Caco-2 (cell line): ENCODE measurements at regions of chr20 and their contacts with region 1.

Region 1: DNA sequence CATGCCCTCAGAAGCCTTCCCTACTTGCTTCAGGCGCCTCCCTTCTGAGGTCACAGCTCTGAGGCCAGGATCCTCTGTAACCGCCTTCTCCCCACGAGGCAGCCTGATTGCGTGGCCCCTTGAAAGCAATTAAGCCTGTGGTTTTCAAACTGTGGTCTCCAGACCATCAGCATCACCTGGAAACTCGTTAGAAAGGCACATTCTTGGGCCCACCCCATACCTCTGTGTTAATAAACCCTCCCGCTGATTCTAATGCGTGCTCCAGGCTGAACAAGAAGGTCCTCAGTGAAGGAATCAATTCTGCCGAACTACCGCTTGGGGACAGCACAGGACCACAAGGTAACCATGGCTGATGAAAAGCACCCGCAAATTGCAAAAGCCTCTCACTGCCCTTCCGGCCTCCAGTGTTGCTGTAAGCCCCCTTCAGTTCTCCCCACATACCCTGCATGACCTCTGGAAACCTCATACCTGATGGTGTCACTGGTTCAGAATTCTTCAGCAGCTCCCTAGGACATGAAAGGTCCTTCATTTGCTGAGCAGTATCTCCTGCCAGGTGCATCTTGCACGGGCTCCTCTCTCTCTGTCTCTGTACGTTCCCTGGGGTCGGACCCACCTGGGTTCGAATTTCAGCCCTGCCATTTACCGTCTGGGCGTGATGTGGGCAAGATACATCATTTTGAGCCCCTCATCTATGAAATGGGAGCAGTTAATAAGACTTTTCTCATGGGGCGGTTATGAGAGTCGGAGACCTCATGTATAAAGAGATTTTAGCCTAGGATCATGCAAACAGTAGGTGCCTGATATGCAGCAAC is 93.3 kb upstream of the RNF24 start:
- DNase-seq: peak; percentile 87 to 88
- H3K4me3 ChIP-seq: no peak overlapping the region
- H3K4me3 Mint-ChIP-seq: no peak overlapping the region
- H3K27ac Mint-ChIP-seq: peak overlapping the region; percentile 77
- H3K4me1 ChIP-seq: peaks cover 8% of the 10 kb centered on the region
- H3K4me1 Mint-ChIP-seq: peaks cover 12% of the 10 kb centered on the region
- H3K27me3 ChIP-seq: no peaks in the 10 kb centered on the region
- H3K27me3 Mint-ChIP-seq: no peaks in the 10 kb centered on the region
- CTCF ChIP-seq: peak; percentile 96 to 97

Region 2: DNA sequence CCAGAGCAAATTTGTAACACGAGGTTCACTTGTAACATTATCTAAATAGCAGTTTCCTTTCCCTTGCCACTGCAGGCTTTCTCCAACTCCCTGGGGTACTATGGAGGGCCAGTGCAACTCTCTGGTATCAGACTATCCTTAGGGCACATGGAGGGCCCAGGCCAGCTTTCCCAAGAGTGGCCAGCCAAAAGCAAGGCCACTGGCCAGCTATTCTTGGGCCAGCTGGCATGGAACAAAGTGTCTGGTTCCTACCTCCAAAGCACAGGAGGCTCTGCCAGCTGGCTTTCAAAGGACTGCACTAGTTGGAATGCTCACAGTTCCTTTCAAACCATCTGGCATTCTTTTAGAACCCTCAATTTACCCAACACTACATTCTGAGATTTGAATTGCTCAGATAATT is 102.1 kb before region 1 on chr20:
- CTCF ChIA-PET with region 1: no interaction called
- POLR2A ChIA-PET with region 1: no interaction called
- intact Hi-C with region 1: no loop called
- DNase-seq: no peak
- H3K4me3 ChIP-seq: no peak overlapping the region
- H3K4me3 Mint-ChIP-seq: no peak overlapping the region
- H3K27ac Mint-ChIP-seq: no peak overlapping the region
- H3K4me1 ChIP-seq: no peaks in the 10 kb centered on the region
- H3K4me1 Mint-ChIP-seq: peaks cover 16% of the 10 kb centered on the region
- H3K27me3 ChIP-seq: no peaks in the 10 kb centered on the region
- H3K27me3 Mint-ChIP-seq: no peaks in the 10 kb centered on the region
- CTCF ChIP-seq: no peak

Region 3: GRCh38 chr20:4018015-4018748 is 90.5 kb before region 1 on chr20:
- CTCF ChIA-PET with region 1: no interaction called
- POLR2A ChIA-PET with region 1: no interaction called
- intact Hi-C with region 1: no loop called
- DNase-seq: peak; percentile 53 to 64
- H3K4me3 ChIP-seq: no peak overlapping the region
- H3K4me3 Mint-ChIP-seq: peak overlapping the region; percentile 39
- H3K27ac Mint-ChIP-seq: peak overlapping the region; percentile 58
- H3K4me1 ChIP-seq: peaks cover 37% of the 10 kb centered on the region
- H3K4me1 Mint-ChIP-seq: peaks cover 25% of the 10 kb centered on the region
- H3K27me3 ChIP-seq: no peaks in the 10 kb centered on the region
- H3K27me3 Mint-ChIP-seq: no peaks in the 10 kb centered on the region
- CTCF ChIP-seq: no peak

Region 4: DNA sequence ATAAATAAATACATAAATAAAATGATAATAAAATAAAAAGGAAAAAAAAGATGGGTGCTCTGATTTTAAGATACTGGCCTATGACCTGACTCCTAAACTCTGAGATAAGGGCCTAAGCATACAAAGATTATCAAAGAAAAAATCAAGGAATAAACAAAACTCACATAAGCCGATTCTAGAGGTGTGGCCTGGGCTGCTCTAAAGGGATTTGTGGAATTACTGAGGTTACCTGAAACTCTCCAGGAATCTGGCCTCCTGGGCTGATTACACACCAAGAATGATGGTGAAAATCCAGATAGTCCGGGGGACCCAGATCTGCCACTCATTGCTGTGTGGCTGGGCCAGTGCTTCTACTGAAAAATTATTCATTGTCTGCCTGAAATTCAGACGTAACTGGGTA is 29.3 kb after region 1 on chr20:
- CTCF ChIA-PET with region 1: no interaction called
- POLR2A ChIA-PET with region 1: no interaction called
- intact Hi-C with region 1: loop called (anchors 1 kb)
- DNase-seq: peak; percentile 88 to 89
- H3K4me3 ChIP-seq: no peak overlapping the region
- H3K4me3 Mint-ChIP-seq: no peak overlapping the region
- H3K27ac Mint-ChIP-seq: no peak overlapping the region
- H3K4me1 ChIP-seq: peaks cover 40% of the 10 kb centered on the region
- H3K4me1 Mint-ChIP-seq: peaks cover 32% of the 10 kb centered on the region
- H3K27me3 ChIP-seq: no peaks in the 10 kb centered on the region
- H3K27me3 Mint-ChIP-seq: no peaks in the 10 kb centered on the region
- CTCF ChIP-seq: no peak

Region 5: GRCh38 chr20:4195499-4195898 is 86.8 kb after region 1 on chr20:
- CTCF ChIA-PET with region 1: interaction called, 7 read pairs
- POLR2A ChIA-PET with region 1: no interaction called
- intact Hi-C with region 1: loop called (anchors 1 kb)
- DNase-seq: peak in 1 of 2 experiments; percentile 56
- H3K4me3 ChIP-seq: no peak overlapping the region
- H3K4me3 Mint-ChIP-seq: no peak overlapping the region
- H3K27ac Mint-ChIP-seq: no peak overlapping the region
- H3K4me1 ChIP-seq: no peaks in the 10 kb centered on the region
- H3K4me1 Mint-ChIP-seq: no peaks in the 10 kb centered on the region
- H3K27me3 ChIP-seq: no peaks in the 10 kb centered on the region
- H3K27me3 Mint-ChIP-seq: no peaks in the 10 kb centered on the region
- CTCF ChIP-seq: peak in 1 of 2 experiments; percentile 57

Region 6: DNA sequence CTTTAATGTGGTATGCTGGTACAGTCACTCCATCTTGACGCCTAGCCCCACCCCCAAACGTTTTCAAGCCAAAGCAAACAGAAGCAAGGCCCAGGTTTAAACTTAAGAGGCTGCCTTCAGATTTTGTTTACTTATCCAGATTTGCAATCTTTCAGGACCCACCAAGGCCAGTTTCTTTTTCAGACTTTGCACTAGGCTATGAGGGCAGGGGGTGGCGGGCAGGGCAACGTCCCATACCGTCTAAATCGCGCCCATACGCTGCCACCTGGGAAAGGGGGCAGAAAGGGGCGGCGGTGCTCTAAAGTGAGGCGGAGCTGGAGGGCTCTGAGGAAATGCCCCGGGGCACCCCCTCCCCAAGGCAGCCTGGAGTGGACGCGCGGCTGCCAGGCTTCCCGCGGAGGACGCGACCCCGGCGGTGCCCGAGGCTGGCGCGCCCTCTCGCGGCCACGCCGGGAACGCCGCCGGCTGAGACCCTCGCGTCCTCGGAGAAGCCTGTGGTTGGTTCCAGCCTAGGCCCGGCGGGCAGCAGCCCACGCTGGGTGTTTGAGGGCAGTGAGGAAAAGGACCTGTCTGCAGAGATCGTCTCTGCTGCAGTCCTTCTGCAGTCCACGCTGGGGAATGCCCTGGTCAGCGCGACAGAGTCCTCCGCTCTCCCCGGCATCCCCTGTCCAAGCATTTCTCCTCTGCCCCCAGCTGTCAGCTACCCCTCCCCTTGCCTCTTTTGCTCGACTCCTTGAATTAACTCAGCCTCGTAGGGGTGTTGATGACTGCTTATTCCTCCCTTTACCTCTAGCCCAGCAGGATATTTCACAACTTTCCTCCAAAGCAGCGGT is 483.8 kb after region 1 on chr20:
- CTCF ChIA-PET with region 1: no interaction called
- POLR2A ChIA-PET with region 1: no interaction called
- intact Hi-C with region 1: loop called (anchors 5 kb)
- DNase-seq: peak; percentile 60 to 87
- H3K4me3 ChIP-seq: peak overlapping the region; percentile 29
- H3K4me3 Mint-ChIP-seq: peak overlapping the region; percentile 66
- H3K27ac Mint-ChIP-seq: no peak overlapping the region
- H3K4me1 ChIP-seq: peaks cover 7% of the 10 kb centered on the region
- H3K4me1 Mint-ChIP-seq: peaks cover 6% of the 10 kb centered on the region
- H3K27me3 ChIP-seq: no peaks in the 10 kb centered on the region
- H3K27me3 Mint-ChIP-seq: no peaks in the 10 kb centered on the region
- CTCF ChIP-seq: peak; percentile 65 to 89